MCF 10A (cell line): ENCODE measurements at regions of chr2 and their contacts with region 1.

Region 1: GRCh38 chr2:118291251-118291880 is 203.1 kb downstream of the INSIG2 start:
- DNase-seq: peak; percentile 14
- H3K4me3 Mint-ChIP-seq: no peak overlapping the region
- H3K27ac Mint-ChIP-seq: no peak overlapping the region
- H3K4me1 Mint-ChIP-seq: no peaks in the 10 kb centered on the region
- H3K27me3 Mint-ChIP-seq: peaks cover 17% of the 10 kb centered on the region
- CTCF ChIP-seq: no peak

Region 2: GRCh38 chr2:118242216-118242615 is 49.1 kb before region 1 on chr2:
- CTCF ChIA-PET with region 1: no interaction called
- POLR2A ChIA-PET with region 1: interaction called, 3 read pairs
- intact Hi-C with region 1: loop called (anchors 5 kb)
- DNase-seq: peak; percentile 67
- H3K4me3 Mint-ChIP-seq: no peak overlapping the region
- H3K27ac Mint-ChIP-seq: no peak overlapping the region
- H3K4me1 Mint-ChIP-seq: peaks cover 26% of the 10 kb centered on the region
- H3K27me3 Mint-ChIP-seq: no peaks in the 10 kb centered on the region
- CTCF ChIP-seq: no peak

Region 3: DNA sequence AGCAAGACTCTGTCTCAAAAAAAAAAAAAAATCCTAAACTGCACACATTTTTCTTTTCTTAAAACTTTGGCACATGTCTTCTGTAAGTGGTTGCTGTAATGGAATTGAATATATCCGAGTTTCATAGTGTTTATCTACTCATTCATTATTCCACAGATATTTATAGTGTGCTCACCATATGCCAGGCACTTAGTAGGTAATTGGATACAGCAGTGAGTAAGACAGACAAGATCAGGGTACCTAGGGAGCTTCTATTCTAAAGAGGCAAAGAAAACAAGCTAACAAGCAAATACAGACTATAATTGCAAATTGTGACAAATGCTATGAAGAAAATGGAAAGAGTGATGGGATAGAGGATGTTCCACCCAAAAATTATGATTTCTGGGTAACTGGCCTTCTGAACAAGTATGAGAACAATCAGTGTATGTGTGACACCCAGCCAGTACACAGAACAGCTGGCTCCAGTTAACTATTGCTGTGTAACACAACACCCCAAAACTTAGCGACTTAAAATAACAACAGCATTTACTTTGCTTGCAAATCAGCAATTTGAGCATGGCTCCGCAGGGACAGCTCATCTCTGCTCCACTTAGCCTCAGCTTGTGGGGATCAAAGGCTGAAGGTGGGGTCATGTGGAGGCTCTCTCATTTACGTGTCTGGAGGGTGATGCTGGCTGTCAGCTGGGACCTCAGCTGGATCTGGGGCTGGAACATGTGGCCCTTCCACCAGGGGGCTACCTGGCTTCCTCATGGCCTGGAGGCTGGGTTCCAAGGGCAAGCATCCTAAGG is 21.8 kb after region 1 on chr2:
- CTCF ChIA-PET with region 1: no interaction called
- POLR2A ChIA-PET with region 1: no interaction called
- intact Hi-C with region 1: no loop called
- DNase-seq: no peak
- H3K4me3 Mint-ChIP-seq: no peak overlapping the region
- H3K27ac Mint-ChIP-seq: no peak overlapping the region
- H3K4me1 Mint-ChIP-seq: no peaks in the 10 kb centered on the region
- H3K27me3 Mint-ChIP-seq: no peaks in the 10 kb centered on the region
- CTCF ChIP-seq: no peak

Region 4: DNA sequence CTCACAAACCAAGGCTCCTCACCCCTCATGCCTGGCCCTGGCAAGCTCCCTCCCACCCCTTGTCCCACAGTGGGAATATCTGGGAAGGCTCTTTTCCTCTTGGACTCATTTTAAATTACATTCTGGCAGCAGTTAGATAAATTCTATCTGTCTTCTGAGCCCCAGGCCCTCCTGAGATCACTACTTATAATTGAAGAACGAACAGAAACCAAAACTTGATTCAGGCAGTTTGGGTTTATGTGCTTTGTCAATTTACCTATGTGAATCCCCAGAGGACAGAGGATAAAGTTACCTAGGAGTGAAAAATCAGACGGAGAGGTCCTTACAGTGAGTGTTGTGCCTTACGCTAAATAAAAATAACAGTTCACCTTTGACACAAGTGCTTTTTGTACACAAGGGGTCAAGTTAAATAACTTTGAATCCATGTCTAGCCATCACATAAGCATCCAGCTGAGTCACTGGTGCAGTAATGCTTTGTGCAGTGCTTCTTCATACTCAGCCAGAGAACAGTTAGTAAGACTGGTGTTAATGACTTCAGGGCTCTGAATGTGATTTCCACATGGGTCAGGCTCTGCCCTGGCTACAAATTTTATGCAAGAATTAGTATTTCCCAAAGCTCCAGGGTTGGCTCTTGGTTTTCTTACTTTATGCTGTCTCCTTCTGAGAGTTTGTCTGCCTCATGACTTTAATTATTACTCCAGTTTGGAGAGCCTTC is 126.2 kb after region 1 on chr2:
- CTCF ChIA-PET with region 1: no interaction called
- POLR2A ChIA-PET with region 1: no interaction called
- intact Hi-C with region 1: no loop called
- DNase-seq: peak; percentile 6
- H3K4me3 Mint-ChIP-seq: no peak overlapping the region
- H3K27ac Mint-ChIP-seq: no peak overlapping the region
- H3K4me1 Mint-ChIP-seq: no peaks in the 10 kb centered on the region
- H3K27me3 Mint-ChIP-seq: no peaks in the 10 kb centered on the region
- CTCF ChIP-seq: no peak

Region 5: DNA sequence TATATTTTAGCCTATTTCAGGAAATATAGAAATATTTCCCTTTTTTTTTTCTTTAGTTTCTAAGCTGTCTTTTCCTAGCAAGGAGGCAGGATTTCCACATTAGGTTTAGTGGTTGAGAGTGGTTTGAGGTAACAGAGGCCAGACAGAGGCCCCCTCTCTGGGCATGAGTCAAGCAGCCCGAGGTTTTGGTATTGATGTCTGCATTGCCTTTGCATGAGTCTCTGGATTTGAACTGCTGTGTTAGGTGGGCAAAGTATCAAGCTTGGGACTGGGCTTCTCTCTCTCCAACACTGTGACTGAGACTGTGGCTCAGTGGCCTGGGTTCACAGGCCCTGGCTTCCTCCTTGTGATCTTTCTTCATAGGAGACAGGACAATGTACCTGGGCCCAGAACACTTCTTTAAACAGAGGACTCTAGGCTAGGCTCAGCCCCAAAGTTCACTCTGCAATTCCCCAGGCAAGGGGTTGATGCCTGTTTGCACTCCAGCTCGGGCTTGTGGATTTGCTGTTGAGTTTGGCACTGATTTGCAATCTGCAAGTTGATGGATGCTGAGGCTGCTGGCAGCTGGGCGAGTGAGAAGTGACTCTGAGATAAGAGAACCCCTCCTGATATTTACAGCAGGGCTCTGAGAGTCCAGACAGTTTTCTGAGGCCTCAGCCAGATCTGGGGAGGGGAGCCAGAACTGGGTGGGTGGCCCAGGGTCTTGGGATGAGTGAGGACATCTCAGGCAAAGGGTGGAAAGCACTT is 284.9 kb after region 1 on chr2:
- CTCF ChIA-PET with region 1: no interaction called
- POLR2A ChIA-PET with region 1: no interaction called
- intact Hi-C with region 1: no loop called
- DNase-seq: no peak
- H3K4me3 Mint-ChIP-seq: no peak overlapping the region
- H3K27ac Mint-ChIP-seq: no peak overlapping the region
- H3K4me1 Mint-ChIP-seq: no peaks in the 10 kb centered on the region
- H3K27me3 Mint-ChIP-seq: no peaks in the 10 kb centered on the region
- CTCF ChIP-seq: no peak